ENCODE measurements at regions of chr3 and their contacts with region 1.

Region 1: GRCh38 chr3:48685602-48686511 is at the start of gene NCKIPSD:
- DNase-seq: peak; percentile 94
- ATAC-seq: peak; percentile 92
- H3K4me3 Mint-ChIP-seq: peak within 1 kb of the TSS; percentile 90
- H3K27ac Mint-ChIP-seq: peak within 1 kb of the TSS; percentile 86
- H3K4me1 Mint-ChIP-seq: peaks cover 30% of the 10 kb centered on the region
- H3K27me3 Mint-ChIP-seq: no peaks in the 10 kb centered on the region
- CTCF ChIP-seq: peak; percentile 24
- total RNA-seq, gene NCKIPSD: 9.2 and 9.7 TPM in 2 replicates

Region 2: GRCh38 chr3:48273594-48274211 is 412.2 kb before region 1 on chr3:
- CTCF ChIA-PET with region 1: no interaction called
- POLR2A ChIA-PET with region 1: no interaction called
- intact Hi-C with region 1: loop called (anchors 10 kb)
- DNase-seq: peak; percentile 31
- ATAC-seq: peak; percentile 67
- H3K4me3 Mint-ChIP-seq: no peak overlapping the region
- H3K27ac Mint-ChIP-seq: no peak overlapping the region
- H3K4me1 Mint-ChIP-seq: no peaks in the 10 kb centered on the region
- H3K27me3 Mint-ChIP-seq: no peaks in the 10 kb centered on the region
- CTCF ChIP-seq: no peak

Region 3: DNA sequence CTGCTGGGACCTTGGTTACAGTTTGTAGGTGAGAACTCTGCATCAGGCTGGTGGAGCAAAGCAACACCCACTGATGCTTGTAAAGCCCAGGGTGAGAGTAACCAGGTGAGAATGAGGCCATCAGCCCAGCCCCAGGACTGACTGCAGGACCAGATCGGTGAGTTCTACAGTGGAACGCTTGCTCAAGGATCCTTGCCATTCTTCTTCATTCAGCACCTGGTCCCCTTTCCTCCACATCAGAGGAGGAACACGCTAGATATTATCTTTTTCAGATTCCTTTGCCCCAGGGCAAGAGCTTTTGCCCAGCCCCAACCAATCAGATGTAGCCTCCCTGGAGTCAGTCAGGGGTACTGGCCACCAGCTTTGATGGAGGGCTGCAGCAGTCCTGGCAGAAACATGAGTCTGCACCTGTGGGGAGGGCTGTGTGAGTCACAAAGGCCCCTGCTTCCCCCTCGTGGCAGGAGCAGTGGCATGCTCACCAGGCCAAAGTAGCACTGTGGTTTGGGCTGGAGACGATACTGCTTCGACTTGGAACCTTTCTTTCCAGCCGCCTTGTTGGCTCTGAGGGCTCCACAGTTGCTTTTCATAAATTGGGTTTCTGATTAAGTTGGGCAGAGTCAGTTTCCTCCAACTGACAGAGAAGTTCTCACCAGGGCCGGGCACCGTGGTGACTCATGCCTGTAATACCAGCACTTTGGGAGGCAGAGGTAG is 178.4 kb before region 1 on chr3:
- CTCF ChIA-PET with region 1: no interaction called
- POLR2A ChIA-PET with region 1: no interaction called
- intact Hi-C with region 1: loop called (anchors 5 kb)
- DNase-seq: peak; percentile 56
- ATAC-seq: peak; percentile 88
- H3K4me3 Mint-ChIP-seq: peak overlapping the region; percentile 24
- H3K27ac Mint-ChIP-seq: no peak overlapping the region
- H3K4me1 Mint-ChIP-seq: peaks cover 15% of the 10 kb centered on the region
- H3K27me3 Mint-ChIP-seq: no peaks in the 10 kb centered on the region
- CTCF ChIP-seq: peak; percentile 28

Region 4: DNA sequence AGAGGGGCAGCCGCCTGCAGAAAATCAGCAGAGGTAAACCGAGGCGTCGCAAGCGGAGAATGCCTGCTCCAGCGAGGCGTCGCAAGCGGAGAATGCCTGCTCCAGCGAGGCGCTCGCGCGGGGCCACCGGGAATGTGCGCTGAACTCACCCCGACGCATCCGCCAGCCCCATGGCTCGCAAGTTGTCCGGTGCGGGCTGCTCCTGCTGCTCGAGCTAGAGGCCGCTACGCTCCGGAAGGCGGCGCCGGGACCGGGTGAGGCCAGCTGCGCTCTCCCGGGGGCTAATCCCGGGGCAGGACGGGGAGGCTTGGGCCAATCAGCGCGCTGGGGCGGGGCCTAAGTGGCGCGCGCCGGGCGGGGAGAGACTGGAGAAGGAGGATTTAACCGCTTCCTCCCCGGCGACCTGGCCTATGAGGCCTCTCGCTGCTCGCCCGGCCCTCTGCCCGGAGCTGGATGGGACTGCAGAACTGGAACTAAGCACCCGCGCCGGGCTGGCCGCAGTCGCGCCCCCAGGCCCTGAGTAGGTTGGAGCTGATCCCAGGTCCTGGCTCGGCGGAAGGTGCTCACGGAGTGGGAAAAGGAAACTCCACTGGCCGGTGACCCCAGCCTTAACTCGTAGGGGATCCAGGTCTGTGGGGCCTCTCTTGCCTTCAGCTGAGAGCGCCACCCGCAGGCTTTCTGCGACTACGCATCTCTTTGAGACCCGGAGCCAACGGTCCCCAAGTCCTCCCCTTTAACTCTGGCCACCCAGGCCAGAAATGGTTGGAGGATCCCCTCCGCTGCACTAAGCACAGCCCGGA is 50.4 kb before region 1 on chr3 and contains the start of gene SLC26A6:
- CTCF ChIA-PET with region 1: no interaction called
- POLR2A ChIA-PET with region 1: no interaction called
- intact Hi-C with region 1: loop called (anchors 1 kb)
- DNase-seq: peak; percentile 90
- ATAC-seq: peak; percentile 97
- H3K4me3 Mint-ChIP-seq: peak within 1 kb of the TSS; percentile 89
- H3K27ac Mint-ChIP-seq: peak within 1 kb of the TSS; percentile 50
- H3K4me1 Mint-ChIP-seq: peaks cover 15% of the 10 kb centered on the region
- H3K27me3 Mint-ChIP-seq: no peaks in the 10 kb centered on the region
- CTCF ChIP-seq: no peak
- total RNA-seq, gene SLC26A6: 12.4 and 21.5 TPM in 2 replicates

Region 5: GRCh38 chr3:48663415-48664312 is 22.2 kb before region 1 on chr3:
- CTCF ChIA-PET with region 1: interaction called, 4 read pairs
- POLR2A ChIA-PET with region 1: interaction called, 3 read pairs
- intact Hi-C with region 1: loop called (anchors 2 kb)
- DNase-seq: peak; percentile 75
- ATAC-seq: peak; percentile 79
- H3K4me3 Mint-ChIP-seq: peak overlapping the region; percentile 81
- H3K27ac Mint-ChIP-seq: no peak overlapping the region
- H3K4me1 Mint-ChIP-seq: peaks cover 24% of the 10 kb centered on the region
- H3K27me3 Mint-ChIP-seq: peaks cover 13% of the 10 kb centered on the region
- CTCF ChIP-seq: no peak

Region 6: GRCh38 chr3:48847504-48848423 is 161.9 kb after region 1 on chr3 and contains the start of gene PRKAR2A:
- CTCF ChIA-PET with region 1: no interaction called
- POLR2A ChIA-PET with region 1: no interaction called
- intact Hi-C with region 1: loop called (anchors 2 kb)
- DNase-seq: peak; percentile 88
- ATAC-seq: peak; percentile 92
- H3K4me3 Mint-ChIP-seq: peak within 1 kb of the TSS; percentile 89
- H3K27ac Mint-ChIP-seq: peak within 1 kb of the TSS; percentile 94
- H3K4me1 Mint-ChIP-seq: peaks cover 30% of the 10 kb centered on the region
- H3K27me3 Mint-ChIP-seq: no peaks in the 10 kb centered on the region
- CTCF ChIP-seq: no peak
- total RNA-seq, gene PRKAR2A: 27.4 and 28.0 TPM in 2 replicates

Measured in activated B cell treated with CpG ODN at 0.5 μM for 24 hours (primary cell).